Ascending aorta (tissue), 2 donors: ENCODE measurements at regions of chr11 and their contacts with region 1.

Region 1: GRCh38 chr11:75867775-75868374 is 52.9 kb downstream of the UVRAG start:
- DNase-seq: no peak
- H3K4me3 ChIP-seq: no peak overlapping the region
- H3K27ac ChIP-seq: no peak overlapping the region
- H3K4me1 ChIP-seq: no peaks in the 10 kb centered on the region
- H3K27me3 ChIP-seq: no peaks in the 10 kb centered on the region
- CTCF ChIP-seq: peak; percentile 75 to 79 (median 77)

Region 2: DNA sequence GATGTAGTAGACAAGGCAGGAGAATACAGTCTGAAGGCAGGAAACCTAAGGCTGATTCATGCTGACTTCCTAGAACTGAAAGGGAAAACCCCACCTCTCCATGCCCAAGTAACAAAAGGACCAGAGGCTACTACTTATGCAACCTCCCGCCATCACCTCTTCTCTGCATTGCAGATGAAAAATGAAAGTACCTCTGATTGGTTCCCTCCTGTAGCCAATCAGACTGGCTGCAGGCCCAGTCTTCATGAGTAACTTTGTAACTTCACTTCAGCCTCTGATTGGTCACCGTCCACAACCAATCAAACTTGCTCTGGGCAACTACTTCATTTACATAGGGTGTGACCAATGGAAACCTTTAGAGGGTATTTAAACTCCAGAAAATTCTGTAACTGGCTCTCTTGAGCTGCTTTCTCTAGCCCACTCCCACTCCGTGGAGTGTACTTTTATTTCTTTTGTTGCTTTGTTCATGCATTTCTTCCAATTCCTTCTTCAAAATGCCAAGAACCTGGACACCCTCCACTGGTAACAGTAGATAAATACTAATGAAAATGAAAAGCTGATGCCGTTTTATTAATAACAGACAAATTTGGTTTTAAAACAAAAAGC is 193.8 kb before region 1 on chr11:
- intact Hi-C with region 1: no loop called
- DNase-seq: no peak
- H3K4me3 ChIP-seq: no peak overlapping the region
- H3K27ac ChIP-seq: no peak overlapping the region
- H3K4me1 ChIP-seq: peaks cover 0 to under 1% of the 10 kb centered on the region in 2 donors
- H3K27me3 ChIP-seq: no peaks in the 10 kb centered on the region
- CTCF ChIP-seq: no peak

Region 3: DNA sequence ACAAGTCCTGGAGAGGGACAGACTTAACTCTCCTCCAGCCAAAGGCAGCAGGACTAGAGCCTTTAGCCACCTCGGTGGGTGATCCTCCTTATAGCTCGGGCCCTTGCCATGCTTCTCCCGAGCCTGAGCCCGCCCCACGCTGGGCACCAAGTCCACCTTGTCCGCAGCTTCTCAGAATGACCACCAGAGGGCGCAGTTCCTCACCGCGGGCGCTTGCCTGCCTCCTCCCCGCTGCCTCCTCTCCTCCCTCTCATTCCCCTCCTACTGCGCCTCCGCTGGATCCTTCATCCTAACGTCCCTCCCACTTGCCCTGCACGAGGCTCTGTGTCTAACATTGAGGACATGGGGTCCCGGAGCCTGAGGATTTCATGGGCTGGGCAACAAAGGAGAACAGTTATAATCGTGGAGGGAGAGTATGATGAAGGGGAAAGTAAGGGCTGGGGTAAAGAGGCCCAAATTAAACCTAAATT is 161.6 kb before region 1 on chr11:
- intact Hi-C with region 1: no loop called
- DNase-seq: peak in 1 of 2 donors; percentile 77
- H3K4me3 ChIP-seq: peak overlapping the region in 1 of 2 donors; percentile 24
- H3K27ac ChIP-seq: no peak overlapping the region
- H3K4me1 ChIP-seq: no peaks in the 10 kb centered on the region
- H3K27me3 ChIP-seq: no peaks in the 10 kb centered on the region
- CTCF ChIP-seq: peak; percentile 81 to 97 (median 88)

Region 4: GRCh38 chr11:75721855-75722668 is 145.8 kb before region 1 on chr11:
- intact Hi-C with region 1: loop called (anchors 10 kb)
- DNase-seq: no peak
- H3K4me3 ChIP-seq: no peak overlapping the region
- H3K27ac ChIP-seq: peak overlapping the region in 1 of 2 donors; percentile 27
- H3K4me1 ChIP-seq: no peaks in the 10 kb centered on the region
- H3K27me3 ChIP-seq: no peaks in the 10 kb centered on the region
- CTCF ChIP-seq: no peak

Region 5: GRCh38 chr11:75826461-75827230 is 41.2 kb before region 1 on chr11:
- intact Hi-C with region 1: loop called (anchors 1 kb)
- DNase-seq: no peak
- H3K4me3 ChIP-seq: peak overlapping the region in 1 of 2 donors; percentile 50
- H3K27ac ChIP-seq: peak overlapping the region; percentile 84 to 90
- H3K4me1 ChIP-seq: peaks cover 12 to 24% of the 10 kb centered on the region in 2 donors
- H3K27me3 ChIP-seq: no peaks in the 10 kb centered on the region
- CTCF ChIP-seq: no peak

Region 6: GRCh38 chr11:75891947-75892739 is 24.3 kb after region 1 on chr11:
- intact Hi-C with region 1: no loop called
- DNase-seq: no peak
- H3K4me3 ChIP-seq: no peak overlapping the region
- H3K27ac ChIP-seq: no peak overlapping the region
- H3K4me1 ChIP-seq: peaks cover 0 to 2% of the 10 kb centered on the region in 2 donors
- H3K27me3 ChIP-seq: no peaks in the 10 kb centered on the region
- CTCF ChIP-seq: no peak

Region 7: DNA sequence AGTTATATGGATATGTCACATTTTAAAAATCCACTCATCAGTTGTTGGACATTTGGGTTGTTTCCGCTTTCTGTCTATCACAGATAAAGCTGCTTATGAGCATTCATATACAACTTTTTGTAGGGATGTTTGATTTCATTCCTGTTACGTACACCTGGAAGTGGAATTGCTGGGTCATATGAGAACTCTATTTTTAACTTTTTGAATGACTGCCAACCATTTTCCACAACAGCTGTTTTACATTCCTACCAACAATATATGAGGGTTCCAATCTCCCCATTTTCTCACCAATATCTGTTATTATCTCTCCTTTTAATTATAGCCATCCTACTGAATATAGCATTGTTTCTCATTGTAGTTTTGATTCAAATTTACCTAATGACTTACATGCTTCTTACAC is 119.1 kb after region 1 on chr11:
- intact Hi-C with region 1: no loop called
- DNase-seq: no peak
- H3K4me3 ChIP-seq: no peak overlapping the region
- H3K27ac ChIP-seq: no peak overlapping the region
- H3K4me1 ChIP-seq: no peaks in the 10 kb centered on the region
- H3K27me3 ChIP-seq: no peaks in the 10 kb centered on the region
- CTCF ChIP-seq: no peak